ENCODE measurements at regions of chr3 and their contacts with region 1.

Region 1: GRCh38 chr3:33440323-33441232 is at the start of gene UBP1:
- DNase-seq: peak; percentile 99
- ATAC-seq: peak; percentile 91
- H3K4me3 Mint-ChIP-seq: peak within 1 kb of the TSS; percentile 99
- H3K27ac Mint-ChIP-seq: peak within 1 kb of the TSS; percentile 100
- H3K4me1 Mint-ChIP-seq: peaks cover 47% of the 10 kb centered on the region
- H3K27me3 Mint-ChIP-seq: no peaks in the 10 kb centered on the region
- total RNA-seq, gene UBP1: 61.9 to 64.6 TPM

Region 2: DNA sequence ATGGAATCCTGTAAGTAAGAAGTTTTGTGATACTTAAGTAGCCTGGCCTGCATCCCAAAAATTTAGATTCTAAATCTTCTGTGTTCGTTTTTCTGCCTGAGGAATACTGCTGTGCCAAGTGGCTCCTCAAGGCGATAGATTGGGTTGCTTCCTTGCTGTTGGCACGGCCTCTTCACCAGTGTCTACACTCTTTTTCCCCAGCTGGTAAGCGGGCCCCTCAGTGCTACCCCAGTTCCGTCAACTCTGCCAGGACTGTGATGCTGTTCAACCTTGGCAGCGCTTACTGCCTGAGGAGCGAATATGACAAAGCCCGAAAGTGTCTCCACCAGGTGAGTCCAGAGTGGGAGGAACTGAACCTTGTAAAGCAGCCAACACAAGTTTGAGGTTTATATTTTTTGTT is 676.1 kb before region 1 on chr3:
- CTCF ChIA-PET with region 1: no interaction called
- POLR2A ChIA-PET with region 1: no interaction called
- DNase-seq: no peak
- ATAC-seq: no peak
- H3K4me3 Mint-ChIP-seq: no peak overlapping the region
- H3K27ac Mint-ChIP-seq: no peak overlapping the region
- H3K4me1 Mint-ChIP-seq: peaks cover under 1% of the 10 kb centered on the region
- H3K27me3 Mint-ChIP-seq: no peaks in the 10 kb centered on the region

Region 3: DNA sequence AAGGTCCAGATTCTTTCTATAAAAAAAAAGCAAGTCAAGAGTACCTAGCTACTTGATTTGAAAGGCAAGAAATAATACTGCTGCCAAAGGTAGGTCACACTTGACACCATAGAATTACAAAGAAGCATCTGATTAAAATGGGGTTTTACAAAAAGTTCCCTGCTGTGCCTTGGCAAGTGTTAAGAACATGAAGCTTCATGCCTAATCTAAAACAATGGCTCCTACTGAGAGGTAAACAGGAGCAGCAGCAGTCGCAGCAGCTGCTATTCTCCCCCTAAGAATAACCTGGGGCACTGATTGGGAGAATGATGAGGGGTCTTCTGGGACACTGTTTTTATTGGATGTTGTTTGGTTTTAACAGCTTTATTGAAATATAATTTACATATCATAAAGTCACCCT is 14.5 kb before region 1 on chr3:
- CTCF ChIA-PET with region 1: interaction called, 11 read pairs
- POLR2A ChIA-PET with region 1: interaction called, 35 read pairs
- DNase-seq: no peak
- ATAC-seq: no peak
- H3K4me3 Mint-ChIP-seq: no peak overlapping the region
- H3K27ac Mint-ChIP-seq: no peak overlapping the region
- H3K4me1 Mint-ChIP-seq: peaks cover 27% of the 10 kb centered on the region
- H3K27me3 Mint-ChIP-seq: no peaks in the 10 kb centered on the region

Region 4: GRCh38 chr3:33798411-33799201 is 358.0 kb after region 1 on chr3 and contains the start of gene PDCD6IP:
- CTCF ChIA-PET with region 1: interaction called, 3 read pairs
- POLR2A ChIA-PET with region 1: interaction called, 11 read pairs
- DNase-seq: peak; percentile 92
- ATAC-seq: peak; percentile 91
- H3K4me3 Mint-ChIP-seq: peak within 1 kb of the TSS; percentile 90
- H3K27ac Mint-ChIP-seq: peak within 1 kb of the TSS; percentile 89
- H3K4me1 Mint-ChIP-seq: peaks cover 56% of the 10 kb centered on the region
- H3K27me3 Mint-ChIP-seq: peaks cover 10% of the 10 kb centered on the region
- total RNA-seq, gene PDCD6IP: 166 to 175 TPM